Pancreas (tissue), 10 donors: ENCODE measurements at regions of chr17 and their contacts with region 1.

Region 1: GRCh38 chr17:67376737-67377487 is at the start of gene PITPNC1:
- DNase-seq: peak; percentile 86 to 95 (median 92)
- ATAC-seq: peak; percentile 74 to 83 (median 80)
- H3K4me3 ChIP-seq: peak within 1 kb of the TSS; percentile 76 to 98 (median 89)
- H3K27ac ChIP-seq: peak within 1 kb of the TSS; percentile 87 to 94 (median 94)
- H3K4me1 ChIP-seq: peaks cover 3 to 8% (median 7%) of the 10 kb centered on the region in 3 donors
- H3K27me3 ChIP-seq: no peaks in the 10 kb centered on the region
- CTCF ChIP-seq: no peak
- total RNA-seq, gene PITPNC1: 21.6 to 28.8 (median 25.3) TPM

Region 2: GRCh38 chr17:67689534-67690177 is 312.7 kb after region 1 on chr17:
- intact Hi-C with region 1: loop called in 2 of 3 experiments (anchors 5 to 10 kb)
- DNase-seq: peak in 3 of 6 donors; percentile 31 to 60 (median 41)
- ATAC-seq: peak; percentile 81 to 95 (median 91)
- H3K4me3 ChIP-seq: no peak overlapping the region
- H3K27ac ChIP-seq: no peak overlapping the region
- H3K4me1 ChIP-seq: no peaks in the 10 kb centered on the region
- H3K27me3 ChIP-seq: no peaks in the 10 kb centered on the region
- CTCF ChIP-seq: peak; percentile 57 to 73 (median 68)